Activated CD4-positive, alpha-beta memory T cell treated with anti-CD3 and anti-CD28 coated beads for 36 hours (primary cell): ENCODE measurements at regions of chr22 and their contacts with region 1.

Region 1: GRCh38 chr22:24230911-24231656 is 13.8 kb downstream of the GGT5 start:
- DNase-seq: peak; percentile 76
- H3K4me3 Mint-ChIP-seq: no peak overlapping the region
- H3K27ac Mint-ChIP-seq: no peak overlapping the region
- H3K4me1 Mint-ChIP-seq: no peaks in the 10 kb centered on the region
- H3K27me3 Mint-ChIP-seq: no peaks in the 10 kb centered on the region

Region 2: DNA sequence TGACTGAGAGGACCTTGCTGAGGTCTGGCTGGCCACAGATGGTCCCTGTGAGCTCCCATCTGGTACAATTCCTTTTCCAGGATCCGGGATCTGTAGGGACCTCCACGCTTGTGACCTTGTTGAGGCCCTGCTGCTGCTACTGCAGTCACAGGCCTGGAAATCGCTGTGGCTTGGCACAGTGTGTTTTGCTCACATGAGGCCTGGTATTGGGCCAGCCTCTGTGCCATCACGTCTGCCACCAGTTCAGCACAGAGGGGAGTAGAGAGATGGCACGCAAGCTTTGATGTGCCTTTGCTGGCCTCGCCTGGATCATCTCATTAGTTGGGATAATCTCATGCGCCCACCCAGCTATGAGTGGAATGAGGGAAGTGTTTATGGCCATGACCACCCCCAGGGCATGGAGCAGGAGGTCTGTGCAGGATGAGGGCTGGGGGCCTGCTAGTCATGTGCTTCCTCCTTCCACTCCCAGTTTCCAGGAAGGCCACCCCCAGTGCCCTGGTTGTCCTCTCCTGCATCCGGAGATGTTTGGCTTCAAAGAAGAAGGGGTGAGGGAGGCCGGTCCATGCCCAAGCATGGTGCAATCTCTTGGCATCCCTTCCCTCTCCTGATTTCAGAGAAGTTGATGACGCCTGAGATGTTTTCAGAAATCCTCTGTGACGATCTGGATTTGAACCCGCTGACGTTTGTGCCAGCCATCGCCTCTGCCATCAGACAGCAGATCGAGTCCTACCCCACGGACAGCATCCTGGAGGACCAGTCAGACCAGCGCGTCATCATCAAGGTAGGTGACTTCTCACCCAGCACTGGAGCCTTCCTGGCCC is 414.7 kb before region 1 on chr22:
- CTCF ChIA-PET with region 1: no interaction called
- POLR2A ChIA-PET with region 1: no interaction called
- intact Hi-C with region 1: no loop called
- DNase-seq: no peak
- H3K4me3 Mint-ChIP-seq: no peak overlapping the region
- H3K27ac Mint-ChIP-seq: no peak overlapping the region
- H3K4me1 Mint-ChIP-seq: peaks cover 7% of the 10 kb centered on the region
- H3K27me3 Mint-ChIP-seq: no peaks in the 10 kb centered on the region

Region 3: GRCh38 chr22:24189249-24190158 is 41.6 kb before region 1 on chr22:
- CTCF ChIA-PET with region 1: interaction called, 19 read pairs
- POLR2A ChIA-PET with region 1: no interaction called
- intact Hi-C with region 1: loop called (anchors 1 kb)
- DNase-seq: peak; percentile 66
- H3K4me3 Mint-ChIP-seq: no peak overlapping the region
- H3K27ac Mint-ChIP-seq: no peak overlapping the region
- H3K4me1 Mint-ChIP-seq: no peaks in the 10 kb centered on the region
- H3K27me3 Mint-ChIP-seq: no peaks in the 10 kb centered on the region

Region 4: GRCh38 chr22:24214467-24215285 is 16.4 kb before region 1 on chr22:
- CTCF ChIA-PET with region 1: interaction called, 15 read pairs
- POLR2A ChIA-PET with region 1: no interaction called
- intact Hi-C with region 1: no loop called
- DNase-seq: no peak
- H3K4me3 Mint-ChIP-seq: no peak overlapping the region
- H3K27ac Mint-ChIP-seq: no peak overlapping the region
- H3K4me1 Mint-ChIP-seq: no peaks in the 10 kb centered on the region
- H3K27me3 Mint-ChIP-seq: no peaks in the 10 kb centered on the region

Region 5: DNA sequence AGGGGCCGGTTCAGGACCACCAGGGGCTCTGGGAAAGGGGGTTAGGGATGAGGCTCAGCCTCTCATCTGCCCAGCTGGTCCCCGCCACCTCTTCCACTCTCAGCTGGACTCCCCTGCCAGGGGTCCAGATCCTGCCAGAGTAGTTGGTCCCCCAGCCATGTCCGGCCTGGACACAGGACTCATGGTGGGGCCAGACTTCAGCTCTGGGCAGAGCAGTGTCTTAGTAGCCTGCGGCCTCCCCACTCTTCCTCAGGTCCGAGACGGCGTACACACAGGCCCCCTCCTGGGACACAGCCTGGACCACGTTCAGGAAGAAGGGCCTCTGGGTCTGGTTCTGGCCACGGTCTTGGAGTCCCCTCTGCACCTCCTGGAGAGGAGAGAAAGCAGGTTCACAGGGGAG is 11.3 kb before region 1 on chr22:
- CTCF ChIA-PET with region 1: interaction called, 15 read pairs
- POLR2A ChIA-PET with region 1: no interaction called
- intact Hi-C with region 1: no loop called
- DNase-seq: no peak
- H3K4me3 Mint-ChIP-seq: no peak overlapping the region
- H3K27ac Mint-ChIP-seq: no peak overlapping the region
- H3K4me1 Mint-ChIP-seq: no peaks in the 10 kb centered on the region
- H3K27me3 Mint-ChIP-seq: no peaks in the 10 kb centered on the region

Region 6: GRCh38 chr22:24289114-24289513 is 58.0 kb after region 1 on chr22:
- CTCF ChIA-PET with region 1: no interaction called
- POLR2A ChIA-PET with region 1: no interaction called
- intact Hi-C with region 1: no loop called
- DNase-seq: no peak
- H3K4me3 Mint-ChIP-seq: no peak overlapping the region
- H3K27ac Mint-ChIP-seq: no peak overlapping the region
- H3K4me1 Mint-ChIP-seq: peaks cover 32% of the 10 kb centered on the region
- H3K27me3 Mint-ChIP-seq: no peaks in the 10 kb centered on the region

Region 7: DNA sequence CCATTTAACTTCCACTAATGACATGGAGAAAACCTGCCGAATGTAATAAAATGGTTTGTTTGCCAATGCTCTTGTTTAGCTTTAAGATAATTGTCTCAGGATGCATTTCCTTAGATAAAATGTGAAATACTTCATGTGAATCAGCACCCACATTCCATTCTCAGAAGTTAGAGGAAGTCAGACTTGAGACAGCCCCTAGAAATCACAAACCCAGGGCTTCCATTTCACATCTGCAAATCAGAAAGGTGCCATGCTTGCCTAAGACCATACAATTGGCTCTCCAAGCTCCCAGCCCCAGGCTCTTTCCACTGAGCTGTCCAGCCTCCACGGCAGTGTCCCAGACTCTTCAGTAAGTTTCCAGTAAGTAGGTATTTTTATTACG is 160.7 kb after region 1 on chr22:
- CTCF ChIA-PET with region 1: no interaction called
- POLR2A ChIA-PET with region 1: no interaction called
- intact Hi-C with region 1: no loop called
- DNase-seq: no peak
- H3K4me3 Mint-ChIP-seq: no peak overlapping the region
- H3K27ac Mint-ChIP-seq: no peak overlapping the region
- H3K4me1 Mint-ChIP-seq: peaks cover 10% of the 10 kb centered on the region
- H3K27me3 Mint-ChIP-seq: no peaks in the 10 kb centered on the region

Region 8: DNA sequence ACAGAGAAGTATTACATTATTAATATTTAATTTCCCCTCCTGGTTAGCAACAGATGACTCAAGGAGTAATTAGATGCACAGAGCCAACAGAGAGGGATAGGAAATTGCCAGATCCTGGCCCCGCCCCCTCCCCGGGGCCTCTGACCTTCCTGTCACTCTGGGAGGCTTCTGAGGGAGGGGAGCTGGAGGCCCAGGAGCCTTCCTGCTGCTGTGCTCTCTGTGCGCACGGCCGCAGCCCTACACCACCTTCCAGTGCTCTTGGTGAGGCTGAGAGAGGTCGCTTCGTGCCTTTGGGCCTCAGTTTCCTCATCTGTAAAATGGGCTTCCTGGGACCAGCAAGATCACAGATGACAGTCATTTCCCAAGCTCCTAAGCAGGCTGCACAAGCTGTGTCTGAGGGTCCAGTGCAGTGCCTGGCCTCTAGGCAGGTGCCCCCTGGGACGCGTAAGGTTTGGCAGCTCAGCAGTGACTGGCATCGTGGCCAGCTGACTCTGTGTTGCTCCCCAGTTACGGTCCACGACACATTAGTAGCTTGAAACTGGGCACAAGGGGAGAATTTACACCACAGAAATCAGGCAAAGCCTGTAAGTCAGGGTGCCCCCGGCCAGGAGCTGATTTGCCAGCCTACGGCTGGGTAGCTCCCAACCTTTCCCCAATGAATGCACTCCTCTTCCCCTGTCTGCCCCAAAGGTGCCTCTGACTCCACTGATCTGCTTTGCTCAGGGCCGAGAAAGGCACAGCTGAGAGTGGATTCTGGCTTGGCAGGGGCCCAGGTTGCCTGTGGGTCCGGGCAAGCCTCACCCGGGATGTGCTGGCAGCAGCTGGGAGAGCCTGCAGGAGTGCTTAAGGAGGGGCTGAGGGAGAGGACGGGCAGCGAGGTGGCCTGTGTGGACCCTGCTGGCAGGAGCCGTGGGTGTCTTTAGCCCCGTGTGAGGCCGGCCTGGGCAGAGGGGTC is 198.6 kb after region 1 on chr22:
- CTCF ChIA-PET with region 1: no interaction called
- POLR2A ChIA-PET with region 1: no interaction called
- intact Hi-C with region 1: no loop called
- DNase-seq: peak; percentile 86
- H3K4me3 Mint-ChIP-seq: peak overlapping the region; percentile 81
- H3K27ac Mint-ChIP-seq: peak overlapping the region; percentile 94
- H3K4me1 Mint-ChIP-seq: peaks cover 80% of the 10 kb centered on the region
- H3K27me3 Mint-ChIP-seq: no peaks in the 10 kb centered on the region